Gastrocnemius medialis (tissue), 4 donors: ENCODE measurements at regions of chr5 and their contacts with region 1.

Region 1: DNA sequence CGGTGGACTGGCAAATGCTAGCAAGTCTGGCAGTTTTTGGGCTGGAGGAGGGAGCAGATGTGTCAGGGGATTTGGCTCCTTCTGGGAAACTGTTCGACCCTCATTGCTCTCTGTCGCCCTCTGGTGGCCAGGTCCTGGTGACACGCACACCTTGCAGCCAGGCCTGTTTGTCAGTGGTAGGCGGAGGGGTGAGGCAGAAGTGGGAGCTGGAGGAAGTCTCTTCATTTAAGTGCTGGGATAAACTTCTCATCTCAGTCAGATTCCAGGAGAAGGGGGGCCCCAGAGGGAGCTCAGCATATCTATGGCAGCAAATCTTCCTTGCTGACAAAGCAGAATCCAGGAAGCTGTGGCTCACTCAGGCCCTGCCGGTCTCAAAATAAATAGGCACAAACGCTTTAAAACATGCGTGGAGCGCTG is 326.5 kb downstream of the ZSWIM6 start:
- DNase-seq: peak; percentile 32 to 50
- ATAC-seq: peak; percentile 58 to 80
- H3K4me3 ChIP-seq: no peak overlapping the region
- H3K27ac ChIP-seq: no peak overlapping the region
- H3K4me1 ChIP-seq: peaks cover 0 to 2% of the 10 kb centered on the region in 2 donors
- H3K27me3 ChIP-seq: no peaks in the 10 kb centered on the region
- CTCF ChIP-seq: peak; percentile 67 to 94 (median 87)
- POLR2A ChIP-seq: no peak

Region 2: DNA sequence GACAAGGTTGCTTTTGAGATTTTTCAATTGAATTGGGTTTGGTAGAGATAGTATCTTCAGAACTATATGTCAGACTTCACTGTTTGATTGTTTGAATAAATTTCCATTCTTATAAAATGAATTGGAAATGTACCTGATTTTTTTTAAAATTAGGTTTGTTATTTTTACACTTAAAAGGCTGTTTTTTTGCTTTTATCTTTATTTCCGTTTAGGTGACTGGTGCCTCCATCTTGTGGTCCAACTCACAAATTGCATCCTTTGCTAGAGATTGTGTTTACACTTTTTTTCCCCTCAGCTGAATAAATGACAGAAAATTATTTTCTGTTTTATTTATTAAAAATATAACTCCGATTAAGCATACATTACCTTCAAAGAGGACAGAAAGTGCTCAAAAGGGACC is 698.0 kb before region 1 on chr5:
- in situ Hi-C with region 1: loop called in 2 of 4 experiments (anchors 10 to 25 kb)
- intact Hi-C with region 1: no loop called
- DNase-seq: no peak
- ATAC-seq: no peak
- H3K4me3 ChIP-seq: no peak overlapping the region
- H3K27ac ChIP-seq: no peak overlapping the region
- H3K4me1 ChIP-seq: peaks cover 17 to 19% of the 10 kb centered on the region in 2 donors
- H3K27me3 ChIP-seq: no peaks in the 10 kb centered on the region
- CTCF ChIP-seq: peak in 2 of 5 experiments; percentile 6 to 34
- POLR2A ChIP-seq: no peak

Region 3: GRCh38 chr5:61055434-61056006 is 603.1 kb before region 1 on chr5:
- in situ Hi-C with region 1: no loop called
- intact Hi-C with region 1: loop called (anchors 5 kb)
- DNase-seq: no peak
- ATAC-seq: no peak
- H3K4me3 ChIP-seq: no peak overlapping the region
- H3K27ac ChIP-seq: no peak overlapping the region
- H3K4me1 ChIP-seq: no peaks in the 10 kb centered on the region
- H3K27me3 ChIP-seq: no peaks in the 10 kb centered on the region
- CTCF ChIP-seq: peak in 3 of 5 experiments; percentile 30 to 48 (median 32)
- POLR2A ChIP-seq: no peak

Region 4: DNA sequence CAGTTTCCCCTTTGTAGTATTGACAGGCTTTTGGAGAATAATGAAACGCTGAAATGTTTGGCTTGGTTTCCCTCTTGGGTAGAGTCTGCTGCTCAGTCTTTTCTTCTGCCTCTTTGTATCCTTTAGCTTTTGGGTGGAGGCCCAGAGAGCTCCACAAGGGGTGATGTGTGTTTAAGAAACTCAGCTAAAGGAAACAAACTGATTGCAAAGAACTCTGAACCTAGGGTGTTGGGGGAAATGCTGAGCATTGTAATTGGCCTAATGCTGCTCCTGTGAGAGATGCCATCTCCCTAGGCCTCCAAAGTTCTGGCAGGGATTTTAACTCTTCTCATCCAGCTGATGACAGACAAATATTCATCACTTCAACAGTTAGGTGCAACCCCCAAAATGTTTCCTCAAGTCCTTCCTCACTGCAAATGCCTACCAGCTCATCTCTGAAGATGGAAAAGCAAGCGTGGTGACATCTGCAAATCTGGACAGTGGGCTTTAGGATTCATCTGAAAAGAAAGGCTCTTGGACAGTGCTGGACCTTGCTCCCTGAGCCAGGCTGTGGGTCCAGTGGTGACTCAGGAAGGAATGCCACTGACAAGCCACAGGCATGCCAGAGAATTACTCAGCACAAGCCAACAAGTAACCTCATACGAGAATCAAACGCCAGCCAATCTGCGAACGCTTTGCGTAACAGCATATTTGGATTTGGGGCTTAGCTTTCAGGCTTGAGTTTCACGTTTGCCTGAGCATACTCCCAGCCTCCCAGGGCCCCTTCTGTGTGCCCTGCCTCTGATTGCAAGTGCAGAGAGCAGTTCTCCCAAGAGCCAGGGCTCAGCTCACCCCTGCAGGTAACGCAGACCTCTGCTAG is 357.0 kb before region 1 on chr5:
- in situ Hi-C with region 1: no loop called
- intact Hi-C with region 1: loop called (anchors 10 kb)
- DNase-seq: peak; percentile 80 to 82
- ATAC-seq: peak; percentile 98 to 99
- H3K4me3 ChIP-seq: no peak overlapping the region
- H3K27ac ChIP-seq: no peak overlapping the region
- H3K4me1 ChIP-seq: peaks cover 16 to 21% of the 10 kb centered on the region in 2 donors
- H3K27me3 ChIP-seq: no peaks in the 10 kb centered on the region
- CTCF ChIP-seq: no peak
- POLR2A ChIP-seq: no peak

Region 5: GRCh38 chr5:61408476-61409168 is 250.0 kb before region 1 on chr5:
- in situ Hi-C with region 1: no loop called
- intact Hi-C with region 1: loop called (anchors 10 kb)
- DNase-seq: peak; percentile 96 to 98
- ATAC-seq: peak; percentile 97 to 98
- H3K4me3 ChIP-seq: peak overlapping the region; percentile 35 to 41 (median 36)
- H3K27ac ChIP-seq: peak overlapping the region; percentile 44 to 66 (median 56)
- H3K4me1 ChIP-seq: peaks cover 10 to 18% of the 10 kb centered on the region in 2 donors
- H3K27me3 ChIP-seq: no peaks in the 10 kb centered on the region
- CTCF ChIP-seq: no peak
- POLR2A ChIP-seq: no peak

Region 6: GRCh38 chr5:61678966-61679365 is 20.4 kb after region 1 on chr5:
- in situ Hi-C with region 1: no loop called
- intact Hi-C with region 1: no loop called
- DNase-seq: no peak
- ATAC-seq: no peak
- H3K4me3 ChIP-seq: no peak overlapping the region
- H3K27ac ChIP-seq: no peak overlapping the region
- H3K4me1 ChIP-seq: no peaks in the 10 kb centered on the region
- H3K27me3 ChIP-seq: no peaks in the 10 kb centered on the region
- CTCF ChIP-seq: no peak
- POLR2A ChIP-seq: no peak

Region 7: GRCh38 chr5:61719124-61719523 is 60.5 kb after region 1 on chr5:
- in situ Hi-C with region 1: no loop called
- intact Hi-C with region 1: no loop called
- DNase-seq: no peak
- ATAC-seq: no peak
- H3K4me3 ChIP-seq: no peak overlapping the region
- H3K27ac ChIP-seq: no peak overlapping the region
- H3K4me1 ChIP-seq: no peaks in the 10 kb centered on the region
- H3K27me3 ChIP-seq: no peaks in the 10 kb centered on the region
- CTCF ChIP-seq: no peak
- POLR2A ChIP-seq: no peak